ENCODE measurements at regions of chr20 and their contacts with region 1.

Region 1: GRCh38 chr20:35541783-35542588 is at the start of gene ERGIC3:
- DNase-seq: peak; percentile 94 to 98 (median 95)
- ATAC-seq: peak; percentile 100
- H3K4me3 ChIP-seq: peak within 1 kb of the TSS; percentile 82
- H3K4me3 Mint-ChIP-seq: peak within 1 kb of the TSS; percentile 88 to 92 (median 91)
- H3K27ac ChIP-seq: peak within 1 kb of the TSS; percentile 77
- H3K27ac Mint-ChIP-seq: peak within 1 kb of the TSS; percentile 82 to 96 (median 91)
- H3K4me1 ChIP-seq: peaks cover 11 to 12% of the 10 kb centered on the region in 2 donors
- H3K4me1 Mint-ChIP-seq: peaks cover 9 to 32% (median 23%) of the 10 kb centered on the region in 7 donors
- H3K27me3 ChIP-seq: no peaks in the 10 kb centered on the region
- H3K27me3 Mint-ChIP-seq: no peaks in the 10 kb centered on the region
- total RNA-seq, gene ERGIC3: 139 to 158 (median 148) TPM

Region 2: DNA sequence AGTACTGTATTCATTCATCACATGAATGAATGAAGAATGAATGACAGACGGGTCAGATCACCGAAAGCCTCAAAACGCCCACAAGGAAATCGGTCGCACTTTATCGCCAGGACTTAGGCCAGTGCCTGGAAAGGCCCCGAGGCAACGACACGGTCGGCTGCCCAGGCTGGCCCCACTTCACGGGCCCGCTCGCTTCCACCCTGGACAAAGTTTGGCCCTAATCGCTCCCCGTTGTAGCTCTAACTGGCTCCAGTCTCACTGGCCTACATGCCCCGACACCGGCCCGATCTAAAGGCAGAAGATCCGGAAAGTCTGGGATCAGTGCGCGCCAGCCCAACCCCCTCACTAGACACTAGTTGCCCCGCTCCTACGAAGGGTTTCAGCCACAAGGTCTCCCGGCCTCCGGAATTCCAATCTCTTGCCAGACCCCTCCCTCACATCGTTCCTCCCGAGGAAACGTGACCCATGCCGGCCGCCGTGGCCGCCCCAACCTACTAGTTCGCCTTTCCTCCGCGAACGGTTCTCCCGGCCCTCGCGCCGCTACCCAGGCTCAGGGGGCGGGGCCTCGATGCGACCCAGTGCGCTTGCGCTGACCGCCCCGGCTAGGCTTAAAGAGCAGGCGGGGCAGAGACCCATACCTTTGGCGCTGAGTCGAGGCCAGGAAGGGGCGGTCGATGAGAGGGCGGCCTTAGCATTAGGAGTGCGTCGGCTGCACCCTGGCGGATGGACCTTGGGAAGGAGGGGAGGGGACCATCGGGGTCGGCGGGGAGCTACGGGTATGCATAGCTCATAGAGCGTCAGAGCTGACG is 586.5 kb before region 1 on chr20 and contains the starts of genes GSS and MYH7B:
- CTCF ChIA-PET with region 1: no interaction called
- POLR2A ChIA-PET with region 1: interaction called, 3 read pairs
- intact Hi-C with region 1: loop called in 1 of 2 experiments (anchors 5 kb)
- DNase-seq: peak; percentile 90 to 100 (median 94)
- ATAC-seq: peak; percentile 97
- H3K4me3 ChIP-seq: peak within 1 kb of the TSS; percentile 87
- H3K4me3 Mint-ChIP-seq: peak within 1 kb of the TSS; percentile 95 to 100 (median 98)
- H3K27ac ChIP-seq: peak within 1 kb of the TSS; percentile 77
- H3K27ac Mint-ChIP-seq: peak within 1 kb of the TSS; percentile 94 to 98 (median 97)
- H3K4me1 ChIP-seq: peaks cover 5 to 11% of the 10 kb centered on the region in 2 donors
- H3K4me1 Mint-ChIP-seq: peaks cover 11 to 40% (median 34%) of the 10 kb centered on the region in 7 donors
- H3K27me3 ChIP-seq: no peaks in the 10 kb centered on the region
- H3K27me3 Mint-ChIP-seq: no peaks in the 10 kb centered on the region
- total RNA-seq, gene GSS: 25.9 to 54.4 (median 45.8) TPM
- total RNA-seq, gene MYH7B: 0.15 to 1.0 (median 0.44) TPM

Region 3: GRCh38 chr20:35410613-35411012 is 131.4 kb before region 1 on chr20:
- CTCF ChIA-PET with region 1: no interaction called
- POLR2A ChIA-PET with region 1: interaction called, 5 read pairs
- intact Hi-C with region 1: loop called in 1 of 2 experiments (anchors 5 kb)
- DNase-seq: no peak
- ATAC-seq: no peak
- H3K4me3 ChIP-seq: peak overlapping the region; percentile 79
- H3K4me3 Mint-ChIP-seq: peak overlapping the region; percentile 92 to 100 (median 98)
- H3K27ac ChIP-seq: no peak overlapping the region
- H3K27ac Mint-ChIP-seq: peak overlapping the region in 8 of 9 donors; percentile 48 to 100 (median 97)
- H3K4me1 ChIP-seq: peaks cover 8 to 9% of the 10 kb centered on the region in 2 donors
- H3K4me1 Mint-ChIP-seq: peaks cover 17 to 24% (median 22%) of the 10 kb centered on the region in 7 donors
- H3K27me3 ChIP-seq: no peaks in the 10 kb centered on the region
- H3K27me3 Mint-ChIP-seq: peaks cover 0 to 2% (median 0%) of the 10 kb centered on the region in 5 donors

Region 4: DNA sequence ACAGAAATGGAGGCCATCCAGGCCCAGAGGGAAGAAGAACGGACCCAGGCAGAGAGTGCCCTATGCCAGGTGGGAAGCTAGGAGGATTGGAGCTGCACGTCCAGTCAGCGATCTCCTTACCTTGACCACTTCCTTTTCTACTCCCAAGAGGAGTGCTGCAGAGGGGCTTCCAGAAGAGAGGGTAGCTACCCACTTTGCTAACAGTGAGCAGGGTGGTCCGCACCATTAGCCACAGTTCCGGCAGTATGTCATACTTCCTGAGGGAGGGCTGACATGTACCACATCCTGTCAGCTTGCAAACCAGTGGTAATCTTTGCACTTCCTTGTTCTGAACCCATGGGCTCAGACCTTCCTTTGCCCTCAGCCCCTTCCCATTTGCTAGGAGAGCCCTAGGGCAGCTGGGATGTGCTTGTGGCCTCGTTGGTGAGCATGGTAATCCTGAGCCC is 51.2 kb before region 1 on chr20:
- CTCF ChIA-PET with region 1: interaction called, 3 read pairs
- POLR2A ChIA-PET with region 1: interaction called, 10 read pairs
- intact Hi-C with region 1: loop called (anchors 1 to 5 kb)
- DNase-seq: peak; percentile 27 to 77 (median 67)
- ATAC-seq: peak; percentile 99
- H3K4me3 ChIP-seq: peak overlapping the region; percentile 92
- H3K4me3 Mint-ChIP-seq: peak overlapping the region; percentile 99 to 100 (median 99)
- H3K27ac ChIP-seq: peak overlapping the region; percentile 84
- H3K27ac Mint-ChIP-seq: peak overlapping the region; percentile 98 to 100 (median 99)
- H3K4me1 ChIP-seq: peaks cover 23 to 27% of the 10 kb centered on the region in 2 donors
- H3K4me1 Mint-ChIP-seq: peaks cover 47 to 92% (median 72%) of the 10 kb centered on the region in 7 donors
- H3K27me3 ChIP-seq: no peaks in the 10 kb centered on the region
- H3K27me3 Mint-ChIP-seq: no peaks in the 10 kb centered on the region

Region 5: GRCh38 chr20:35561268-35561667 is 19.3 kb after region 1 on chr20:
- CTCF ChIA-PET with region 1: no interaction called
- POLR2A ChIA-PET with region 1: no interaction called
- intact Hi-C with region 1: no loop called
- DNase-seq: peak in 5 of 9 donors; percentile 14 to 23 (median 16)
- ATAC-seq: peak; percentile 65
- H3K4me3 ChIP-seq: no peak overlapping the region
- H3K4me3 Mint-ChIP-seq: no peak overlapping the region
- H3K27ac ChIP-seq: no peak overlapping the region
- H3K27ac Mint-ChIP-seq: peak overlapping the region in 1 of 9 donors; percentile 9
- H3K4me1 ChIP-seq: no peaks in the 10 kb centered on the region
- H3K4me1 Mint-ChIP-seq: no peaks in the 10 kb centered on the region
- H3K27me3 ChIP-seq: no peaks in the 10 kb centered on the region
- H3K27me3 Mint-ChIP-seq: no peaks in the 10 kb centered on the region

Region 6: DNA sequence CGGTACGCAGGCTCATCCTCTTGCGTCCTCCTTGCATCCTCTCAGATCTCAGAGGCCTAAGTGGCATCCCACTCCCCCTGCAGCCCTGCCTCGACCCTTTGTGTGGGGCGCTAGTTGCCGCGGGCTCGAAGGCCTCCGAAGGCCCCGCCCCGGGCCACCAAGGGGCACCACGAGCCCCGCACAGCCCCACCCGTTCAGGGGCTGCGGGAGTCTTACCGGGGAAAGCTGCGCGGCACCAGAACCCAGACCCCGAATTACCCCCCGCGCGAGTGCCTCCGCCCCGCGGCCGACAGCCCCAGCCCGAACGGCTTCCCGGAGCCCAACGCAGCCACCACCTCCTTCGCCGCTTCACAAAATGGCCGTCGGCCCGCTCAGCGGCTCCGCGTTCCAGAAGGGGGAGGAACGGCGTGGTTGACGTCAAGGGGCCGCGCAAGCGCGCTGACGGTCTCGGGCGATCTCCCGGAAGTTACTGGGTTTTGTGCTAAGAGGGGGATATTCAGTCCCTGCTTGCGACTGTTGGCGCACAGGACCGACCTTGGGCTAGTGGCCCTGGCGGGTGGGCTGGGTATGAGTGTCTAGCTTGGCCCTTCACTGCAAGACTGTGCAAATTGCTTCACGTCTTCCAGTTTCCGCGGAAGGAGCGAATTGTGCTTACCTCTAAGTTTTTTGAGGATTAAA is 122.7 kb after region 1 on chr20 and contains the starts of genes CPNE1 and RBM12:
- CTCF ChIA-PET with region 1: no interaction called
- POLR2A ChIA-PET with region 1: interaction called, 6 read pairs
- intact Hi-C with region 1: loop called (anchors 2 kb)
- DNase-seq: peak; percentile 89 to 96 (median 96)
- ATAC-seq: peak; percentile 89
- H3K4me3 ChIP-seq: peak within 1 kb of the TSS; percentile 88
- H3K4me3 Mint-ChIP-seq: peak within 1 kb of the TSS; percentile 89 to 98 (median 96)
- H3K27ac ChIP-seq: peak within 1 kb of the TSS; percentile 100
- H3K27ac Mint-ChIP-seq: peak within 1 kb of the TSS; percentile 98 to 100 (median 99)
- H3K4me1 ChIP-seq: peaks cover 35 to 38% of the 10 kb centered on the region in 2 donors
- H3K4me1 Mint-ChIP-seq: peaks cover 32 to 49% (median 47%) of the 10 kb centered on the region in 7 donors
- H3K27me3 ChIP-seq: no peaks in the 10 kb centered on the region
- H3K27me3 Mint-ChIP-seq: no peaks in the 10 kb centered on the region
- total RNA-seq, gene CPNE1: 250 to 378 (median 305) TPM
- total RNA-seq, gene RBM12: 98.2 to 122 (median 114) TPM

Measured in naive thymus-derived CD4-positive, alpha-beta T cell (primary cell).